IMR-90 (cell line): ENCODE measurements at regions of chr1 and their contacts with region 1.

Region 1: GRCh38 chr1:202716654-202717053 is 6.4 kb upstream of the SYT2 start:
- DNase-seq: no peak
- ATAC-seq: no peak
- H3K4me3 ChIP-seq: no peak overlapping the region
- H3K27ac ChIP-seq: no peak overlapping the region
- H3K4me1 ChIP-seq: no peaks in the 10 kb centered on the region
- H3K27me3 ChIP-seq: peaks cover 35% of the 10 kb centered on the region
- CTCF ChIP-seq: no peak
- POLR2A ChIP-seq: no peak
- RAD21 ChIP-seq: no peak

Region 2: GRCh38 chr1:202184750-202185460 is 531.7 kb before region 1 on chr1:
- CTCF ChIA-PET with region 1: interaction called, 3 read pairs
- POLR2A ChIA-PET with region 1: no interaction called
- dilution Hi-C with region 1: no loop called
- in situ Hi-C with region 1: loop called (anchors 5 kb)
- intact Hi-C with region 1: loop called (anchors 1 kb)
- DNase-seq: peak; percentile 83
- ATAC-seq: peak; percentile 88
- H3K4me3 ChIP-seq: no peak overlapping the region
- H3K27ac ChIP-seq: no peak overlapping the region
- H3K4me1 ChIP-seq: no peaks in the 10 kb centered on the region
- H3K27me3 ChIP-seq: peaks cover 64% of the 10 kb centered on the region
- CTCF ChIP-seq: peak; percentile 90
- POLR2A ChIP-seq: no peak
- RAD21 ChIP-seq: peak; percentile 72

Region 3: DNA sequence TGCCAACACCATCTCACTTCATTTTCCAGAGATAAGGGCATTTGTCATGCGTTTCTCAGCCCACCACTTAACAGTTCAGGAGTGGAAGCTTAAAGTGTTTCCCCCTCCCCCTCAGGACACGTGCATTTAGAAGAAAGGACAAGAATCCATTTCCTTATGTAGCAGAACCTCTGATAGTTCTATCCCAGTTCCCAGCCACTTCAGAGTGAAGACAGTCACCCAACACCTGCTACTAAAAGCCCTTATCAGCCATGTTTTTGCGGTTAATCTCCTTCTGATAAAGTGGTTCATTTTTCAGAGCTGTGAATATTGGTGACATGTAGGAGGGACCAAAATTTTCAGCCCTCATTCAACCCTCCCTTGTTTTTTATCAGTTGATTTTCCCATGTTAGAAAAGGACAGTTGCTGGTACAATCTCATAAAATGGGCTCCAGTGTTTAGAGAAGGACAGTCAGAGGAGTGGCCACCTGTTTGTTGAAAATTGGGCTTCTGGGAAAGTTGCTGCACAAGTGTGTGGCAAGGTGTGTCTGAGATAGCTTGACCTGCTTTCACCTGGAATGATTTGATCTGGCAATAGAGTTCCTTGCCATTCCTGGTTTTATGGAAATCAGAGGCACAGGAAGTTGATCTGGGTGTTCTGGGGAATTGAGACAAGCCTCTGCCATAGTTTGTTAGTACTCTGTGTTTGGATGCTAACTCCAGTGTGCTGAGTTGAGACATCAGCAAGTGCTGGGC is 254.1 kb before region 1 on chr1:
- CTCF ChIA-PET with region 1: interaction called, 6 read pairs
- POLR2A ChIA-PET with region 1: no interaction called
- dilution Hi-C with region 1: no loop called
- in situ Hi-C with region 1: no loop called
- intact Hi-C with region 1: loop called (anchors 1 kb)
- DNase-seq: no peak
- ATAC-seq: no peak
- H3K4me3 ChIP-seq: no peak overlapping the region
- H3K27ac ChIP-seq: no peak overlapping the region
- H3K4me1 ChIP-seq: peaks cover 5% of the 10 kb centered on the region
- H3K27me3 ChIP-seq: no peaks in the 10 kb centered on the region
- CTCF ChIP-seq: no peak
- POLR2A ChIP-seq: no peak
- RAD21 ChIP-seq: no peak

Region 4: GRCh38 chr1:202579806-202580205 is 136.8 kb before region 1 on chr1:
- CTCF ChIA-PET with region 1: interaction called, 10 read pairs
- POLR2A ChIA-PET with region 1: no interaction called
- dilution Hi-C with region 1: no loop called
- in situ Hi-C with region 1: no loop called
- intact Hi-C with region 1: no loop called
- DNase-seq: peak; percentile 96
- ATAC-seq: peak; percentile 44
- H3K4me3 ChIP-seq: no peak overlapping the region
- H3K27ac ChIP-seq: peak overlapping the region; percentile 89; the same call in 1 of the 2 replicates
- H3K4me1 ChIP-seq: peaks cover 40% of the 10 kb centered on the region
- H3K27me3 ChIP-seq: no peaks in the 10 kb centered on the region
- CTCF ChIP-seq: no peak
- POLR2A ChIP-seq: no peak; the same call in 1 of the 2 replicates
- RAD21 ChIP-seq: no peak

Region 5: GRCh38 chr1:202593845-202594244 is 122.8 kb before region 1 on chr1:
- CTCF ChIA-PET with region 1: no interaction called
- POLR2A ChIA-PET with region 1: no interaction called
- dilution Hi-C with region 1: no loop called
- in situ Hi-C with region 1: no loop called
- intact Hi-C with region 1: no loop called
- DNase-seq: peak; percentile 30
- ATAC-seq: no peak
- H3K4me3 ChIP-seq: no peak overlapping the region
- H3K27ac ChIP-seq: no peak overlapping the region; the same call in 1 of the 2 replicates
- H3K4me1 ChIP-seq: peaks cover 19% of the 10 kb centered on the region
- H3K27me3 ChIP-seq: no peaks in the 10 kb centered on the region
- CTCF ChIP-seq: no peak
- POLR2A ChIP-seq: no peak
- RAD21 ChIP-seq: no peak